ENCODE measurements at regions of chr5 and their contacts with region 1.

Region 1: GRCh38 chr5:59380350-59380951 is 513.1 kb downstream of the PDE4D start:
- DNase-seq: peak; percentile 22
- H3K4me3 Mint-ChIP-seq: no peak overlapping the region
- H3K27ac Mint-ChIP-seq: no peak overlapping the region
- H3K4me1 Mint-ChIP-seq: peaks cover 3% of the 10 kb centered on the region
- H3K27me3 Mint-ChIP-seq: peaks cover 9% of the 10 kb centered on the region

Region 2: DNA sequence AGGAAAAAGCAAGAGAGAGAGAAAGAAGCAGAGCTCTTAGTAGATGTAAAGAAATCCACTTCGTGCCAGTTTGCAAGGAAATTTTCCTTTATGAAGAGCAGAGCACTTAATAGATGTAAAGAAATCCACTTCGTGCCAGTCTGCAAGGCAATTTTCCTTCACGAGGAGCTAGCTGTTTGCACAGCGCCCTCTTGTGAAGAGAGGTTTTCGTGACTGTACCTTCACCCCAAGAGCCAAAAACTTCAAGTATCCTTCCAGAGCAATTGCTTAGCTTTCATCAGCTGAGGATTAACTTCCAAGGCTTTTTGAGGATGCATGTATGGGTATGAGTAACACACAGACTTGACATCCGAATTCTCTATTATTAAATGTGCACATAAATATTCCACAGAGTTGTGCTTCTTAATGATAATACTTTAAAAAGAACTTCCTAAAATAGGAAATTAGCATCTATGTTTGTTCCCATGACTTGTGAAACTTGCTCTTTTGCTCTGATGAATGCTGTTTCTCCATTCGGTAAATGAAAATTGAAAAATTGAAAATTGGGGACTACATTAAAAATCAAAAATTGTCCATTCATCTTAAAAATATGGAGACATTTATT is 12.6 kb before region 1 on chr5:
- CTCF ChIA-PET with region 1: interaction called, 11 read pairs
- POLR2A ChIA-PET with region 1: no interaction called
- DNase-seq: peak; percentile 48
- H3K4me3 Mint-ChIP-seq: no peak overlapping the region
- H3K27ac Mint-ChIP-seq: no peak overlapping the region
- H3K4me1 Mint-ChIP-seq: peaks cover 8% of the 10 kb centered on the region
- H3K27me3 Mint-ChIP-seq: peaks cover 26% of the 10 kb centered on the region

Measured in activated CD4-positive, alpha-beta memory T cell treated with anti-CD3 and anti-CD28 coated beads, Interleukin-2, amount 10 ng/mL, durations not matched to agents 7 days and 5 days (primary cell).